BJ (cell line): ENCODE measurements at regions of chr10 and their contacts with region 1.

Region 1: GRCh38 chr10:43671656-43672531 is 23.2 kb upstream of the ZNF32 start:
- DNase-seq: no peak
- H3K4me3 ChIP-seq: no peak overlapping the region
- H3K27me3 ChIP-seq: no peaks in the 10 kb centered on the region
- CTCF ChIP-seq: peak; percentile 68

Region 2: GRCh38 chr10:43683451-43684291 is 11.8 kb after region 1 on chr10:
- CTCF ChIA-PET with region 1: interaction called, 18 read pairs
- POLR2A ChIA-PET with region 1: no interaction called
- DNase-seq: no peak
- H3K4me3 ChIP-seq: no peak overlapping the region
- H3K27me3 ChIP-seq: no peaks in the 10 kb centered on the region
- CTCF ChIP-seq: peak; percentile 57

Region 3: DNA sequence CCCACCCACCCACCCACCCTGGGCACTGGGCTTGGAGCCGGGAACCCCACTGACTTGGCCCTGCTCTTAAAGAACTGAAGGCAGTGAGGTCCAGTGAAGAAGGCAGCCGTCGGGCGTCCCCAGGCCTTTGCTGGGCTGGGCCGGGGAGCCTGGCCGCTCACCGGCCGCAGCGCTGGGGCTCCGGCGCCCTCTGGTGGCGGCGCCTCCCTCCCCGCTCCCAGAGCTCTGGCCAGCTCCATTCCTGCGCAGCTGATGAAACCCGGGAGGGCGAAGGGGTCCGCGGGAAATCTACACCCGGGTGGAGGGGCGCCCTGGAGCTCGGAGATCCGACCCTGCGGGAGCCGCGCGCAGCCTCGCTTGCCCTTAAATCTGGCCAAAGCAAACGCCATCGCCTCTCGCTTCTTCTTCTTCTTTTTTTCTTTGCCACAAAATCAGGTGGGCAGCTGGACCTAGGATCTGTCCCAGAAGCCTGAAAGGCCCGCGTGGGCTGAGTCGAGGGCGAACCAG is 714.7 kb after region 1 on chr10:
- CTCF ChIA-PET with region 1: interaction called, 22 read pairs
- POLR2A ChIA-PET with region 1: no interaction called
- DNase-seq: no peak
- H3K4me3 ChIP-seq: no peak overlapping the region
- H3K27me3 ChIP-seq: no peaks in the 10 kb centered on the region
- CTCF ChIP-seq: peak; percentile 77

Region 4: DNA sequence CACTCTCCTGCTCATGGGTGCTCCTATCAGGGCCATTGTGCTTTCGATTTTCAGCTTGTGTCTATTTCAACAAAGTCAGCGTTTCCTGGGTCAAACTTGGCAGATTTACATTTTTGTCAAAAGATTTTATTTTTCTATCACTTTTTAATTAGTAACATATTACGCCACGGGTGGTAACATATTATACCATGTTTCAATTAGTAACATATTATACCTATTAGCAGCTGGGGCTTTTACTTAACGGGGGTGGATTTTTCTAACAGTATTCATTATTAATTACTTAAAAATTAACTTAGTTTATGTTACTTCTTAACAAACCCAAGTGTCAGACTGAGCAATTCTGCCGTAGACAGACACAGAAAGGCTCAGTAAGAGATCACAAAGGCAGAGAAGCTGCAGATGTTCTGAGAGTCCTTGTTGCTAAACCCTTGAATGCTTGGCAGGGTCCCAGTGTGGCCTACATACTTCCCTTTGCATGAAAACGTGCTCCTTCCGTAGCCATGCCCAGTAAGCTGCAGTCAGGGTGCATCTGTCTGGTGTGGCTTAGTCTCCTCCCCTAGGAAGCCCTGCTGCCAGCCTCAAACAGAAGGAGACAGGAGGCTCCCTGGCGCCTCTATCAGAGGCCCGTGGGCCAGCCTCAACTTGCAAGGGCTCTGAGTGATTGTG is 976.1 kb after region 1 on chr10:
- CTCF ChIA-PET with region 1: no interaction called
- POLR2A ChIA-PET with region 1: no interaction called
- DNase-seq: peak; percentile 56
- H3K4me3 ChIP-seq: no peak overlapping the region
- H3K27me3 ChIP-seq: no peaks in the 10 kb centered on the region
- CTCF ChIP-seq: no peak

Region 5: GRCh38 chr10:44742248-44742647 is 1070.4 kb after region 1 on chr10:
- CTCF ChIA-PET with region 1: no interaction called
- POLR2A ChIA-PET with region 1: interaction called, 13 read pairs
- DNase-seq: no peak
- H3K4me3 ChIP-seq: no peak overlapping the region
- H3K27me3 ChIP-seq: no peaks in the 10 kb centered on the region
- CTCF ChIP-seq: no peak